ENCODE measurements at regions of chr7 and their contacts with region 1.

Region 1: GRCh38 chr7:6096581-6096980 is 65.4 kb downstream of the ANKRD61 start:
- DNase-seq: no peak
- ATAC-seq: no peak
- H3K4me3 ChIP-seq: no peak overlapping the region
- H3K27ac ChIP-seq: no peak overlapping the region
- H3K4me1 ChIP-seq: no peaks in the 10 kb centered on the region
- H3K27me3 ChIP-seq: no peaks in the 10 kb centered on the region
- CTCF ChIP-seq: no peak

Region 2: DNA sequence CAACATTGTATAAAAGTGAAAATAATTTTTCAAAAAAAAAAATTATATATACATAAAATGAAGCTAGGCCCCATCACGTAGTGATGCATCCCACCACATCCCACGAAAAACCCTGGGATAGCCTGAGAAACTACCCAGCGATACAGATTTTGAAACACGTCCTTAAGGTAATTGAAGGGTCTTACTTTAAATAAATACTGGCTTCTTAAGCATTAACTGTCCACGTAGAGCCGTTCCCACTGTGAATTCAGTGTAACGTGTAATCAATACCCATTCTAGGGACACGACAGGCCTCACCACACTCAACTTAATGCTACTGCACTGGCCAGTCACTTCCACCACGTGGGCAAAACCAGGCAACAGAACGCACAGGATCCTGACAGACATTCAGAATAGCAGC is 61.4 kb before region 1 on chr7:
- CTCF ChIA-PET with region 1: no interaction called
- POLR2A ChIA-PET with region 1: interaction called, 11 read pairs
- in situ Hi-C with region 1: no loop called
- intact Hi-C with region 1: no loop called
- DNase-seq: no peak
- ATAC-seq: no peak
- H3K4me3 ChIP-seq: no peak overlapping the region
- H3K27ac ChIP-seq: no peak overlapping the region
- H3K4me1 ChIP-seq: no peaks in the 10 kb centered on the region
- H3K27me3 ChIP-seq: no peaks in the 10 kb centered on the region
- CTCF ChIP-seq: no peak

Region 3: GRCh38 chr7:6056616-6057015 is 40.0 kb before region 1 on chr7:
- CTCF ChIA-PET with region 1: no interaction called
- POLR2A ChIA-PET with region 1: no interaction called
- in situ Hi-C with region 1: no loop called
- intact Hi-C with region 1: no loop called
- DNase-seq: no peak
- ATAC-seq: no peak
- H3K4me3 ChIP-seq: peak overlapping the region; percentile 67 to 73
- H3K27ac ChIP-seq: 0 out of 2 replicates have a peak overlapping the region, but pooled peaks have one; percentile 89
- H3K4me1 ChIP-seq: peaks cover 8% of the 10 kb centered on the region
- H3K27me3 ChIP-seq: no peaks in the 10 kb centered on the region
- CTCF ChIP-seq: no peak